ENCODE measurements at regions of chr11 and their contacts with region 1.

Region 1: GRCh38 chr11:8006349-8006977 is 19.3 kb downstream of the EIF3F start:
- DNase-seq: no peak
- ATAC-seq: peak; percentile 62
- H3K4me3 Mint-ChIP-seq: no peak overlapping the region
- H3K27ac Mint-ChIP-seq: no peak overlapping the region
- H3K4me1 Mint-ChIP-seq: no peaks in the 10 kb centered on the region
- H3K27me3 Mint-ChIP-seq: peaks cover 4% of the 10 kb centered on the region
- CTCF ChIP-seq: no peak

Region 2: DNA sequence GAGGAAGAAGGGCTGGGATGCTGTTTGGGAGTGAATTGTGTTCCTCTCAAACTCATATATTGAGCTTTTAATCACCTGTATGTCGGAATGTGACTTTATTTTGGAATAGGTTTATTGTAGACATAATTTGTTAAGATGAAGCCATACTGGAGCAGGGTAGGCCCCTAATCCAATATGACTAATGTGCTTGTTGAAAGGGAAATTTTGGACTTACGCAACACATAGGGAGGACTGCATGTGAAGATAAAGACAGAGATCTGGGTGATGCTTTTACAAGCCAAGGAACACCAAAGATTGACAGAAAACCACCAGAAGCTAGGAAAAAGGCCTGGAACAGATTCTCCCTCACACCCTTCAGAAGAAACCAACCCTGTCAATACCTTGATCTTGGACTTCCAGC is 257.0 kb before region 1 on chr11:
- CTCF ChIA-PET with region 1: no interaction called
- POLR2A ChIA-PET with region 1: no interaction called
- intact Hi-C with region 1: no loop called
- DNase-seq: no peak
- ATAC-seq: no peak
- H3K4me3 Mint-ChIP-seq: no peak overlapping the region
- H3K27ac Mint-ChIP-seq: no peak overlapping the region
- H3K4me1 Mint-ChIP-seq: no peaks in the 10 kb centered on the region
- H3K27me3 Mint-ChIP-seq: no peaks in the 10 kb centered on the region
- CTCF ChIP-seq: no peak

Region 3: DNA sequence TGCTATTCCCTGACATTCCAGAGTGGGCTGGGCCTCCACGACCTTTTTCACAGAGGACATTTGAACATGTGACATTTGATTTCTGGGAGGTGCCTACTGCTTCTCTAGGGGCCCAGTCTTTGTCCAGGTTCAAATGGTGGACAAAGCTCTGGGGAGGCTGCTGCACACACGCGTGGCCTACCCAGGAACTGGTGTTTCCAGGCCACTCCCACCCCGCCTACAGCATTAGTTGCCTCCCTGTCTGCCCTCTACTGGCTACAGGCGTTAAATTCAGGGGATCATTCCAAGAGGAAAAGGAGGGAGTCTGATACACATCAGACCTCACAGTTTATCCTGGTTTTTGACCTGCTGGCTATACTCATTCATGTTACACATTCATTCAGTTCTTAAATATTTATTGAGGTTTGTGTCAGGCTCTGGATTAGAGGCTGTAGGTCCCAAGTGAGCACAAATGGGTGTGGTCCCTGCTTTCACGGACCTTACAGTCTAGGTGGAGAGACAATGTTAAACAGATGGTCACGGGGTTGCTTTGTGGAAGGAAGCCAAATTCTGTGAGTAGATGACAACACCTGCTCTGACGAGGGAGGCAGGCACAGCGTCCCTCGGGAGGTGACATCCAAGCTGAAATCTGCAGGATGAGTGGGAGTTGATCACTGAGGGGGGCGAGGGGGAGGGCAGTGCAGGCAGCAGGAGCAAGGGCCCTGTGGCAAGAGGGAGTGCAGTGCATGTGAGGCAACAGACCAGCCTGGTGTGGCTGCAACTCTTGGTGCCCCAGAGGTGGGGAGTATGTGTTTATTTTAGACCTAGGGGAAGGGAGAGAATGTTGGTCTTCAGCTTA is 86.3 kb after region 1 on chr11:
- CTCF ChIA-PET with region 1: interaction called, 86 read pairs
- POLR2A ChIA-PET with region 1: no interaction called
- intact Hi-C with region 1: loop called (anchors 1 kb)
- DNase-seq: no peak
- ATAC-seq: peak; percentile 67
- H3K4me3 Mint-ChIP-seq: no peak overlapping the region
- H3K27ac Mint-ChIP-seq: no peak overlapping the region
- H3K4me1 Mint-ChIP-seq: no peaks in the 10 kb centered on the region
- H3K27me3 Mint-ChIP-seq: no peaks in the 10 kb centered on the region
- CTCF ChIP-seq: no peak